SK-N-SH (cell line): ENCODE measurements at regions of chr17 and their contacts with region 1.

Region 1: GRCh38 chr17:73156166-73156840 is 8.5 kb upstream of the SSTR2 start:
- DNase-seq: peak; percentile 92
- H3K4me3 ChIP-seq: peak overlapping the region in 1 of 2 experiments; percentile 31; a peak in 2 of 4 replicates
- H3K27ac ChIP-seq: peak overlapping the region in 1 of 2 experiments; percentile 45; a peak in 1 of 4 replicates
- H3K4me1 ChIP-seq: peaks cover 6 to 22% of the 10 kb centered on the region in 2 experiments; a peak in 1 of 4 replicates
- H3K27me3 ChIP-seq: no peaks in the 10 kb centered on the region
- CTCF ChIP-seq: peak; percentile 89
- EP300 ChIP-seq: 0 out of 4 replicates have a peak, but pooled peaks have one; percentile 9 to 24
- RAD21 ChIP-seq: peak; percentile 90

Region 2: DNA sequence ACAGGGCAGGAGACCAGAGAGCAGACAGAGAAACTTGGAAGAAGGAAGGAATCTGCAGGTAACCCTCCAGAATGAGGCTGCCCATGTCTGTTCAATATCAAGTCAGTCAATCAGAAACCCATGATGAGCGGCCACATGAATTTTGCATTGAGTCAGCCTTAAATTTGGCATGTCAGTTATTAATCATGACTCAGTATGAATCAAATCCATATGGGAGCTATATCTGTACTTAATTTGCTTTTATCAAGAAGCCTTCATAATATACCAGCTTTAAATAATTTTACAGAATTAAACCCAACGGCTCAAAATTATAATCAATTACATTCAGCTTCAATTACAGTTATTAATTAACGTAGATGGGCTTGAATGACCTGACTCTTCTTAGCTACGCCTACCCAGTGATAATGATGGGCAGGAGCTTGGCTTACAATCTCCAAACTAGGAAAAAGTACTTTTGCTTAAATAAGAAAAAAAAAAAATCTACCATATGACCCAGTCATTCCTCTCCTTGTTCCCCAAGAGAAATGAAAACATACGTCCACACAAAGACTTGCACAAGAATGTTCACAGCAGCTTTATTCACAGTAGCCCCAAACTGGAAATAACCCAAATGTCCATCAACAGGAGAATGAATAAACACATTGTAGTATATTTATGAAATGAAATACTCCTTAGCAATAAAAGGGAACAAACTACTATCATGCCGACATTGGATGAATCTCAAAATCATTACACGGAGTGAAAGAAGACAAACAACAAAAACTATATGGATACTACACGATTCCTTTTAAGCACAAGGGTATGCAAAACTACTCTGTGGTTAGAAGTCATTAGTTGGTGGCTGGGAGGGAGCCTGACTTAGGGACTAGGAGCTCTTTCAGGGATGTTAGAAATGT is 112.4 kb before region 1 on chr17:
- CTCF ChIA-PET with region 1: interaction called, 12 read pairs
- POLR2A ChIA-PET with region 1: no interaction called
- DNase-seq: peak; percentile 35
- H3K4me3 ChIP-seq: peak overlapping the region in 1 of 2 experiments; percentile 16; a peak in 2 of 4 replicates
- H3K27ac ChIP-seq: peak overlapping the region; percentile 58 to 78
- H3K4me1 ChIP-seq: peaks cover 9 to 18% of the 10 kb centered on the region in 2 experiments; a peak in 3 of 4 replicates
- H3K27me3 ChIP-seq: no peaks in the 10 kb centered on the region
- CTCF ChIP-seq: no peak
- EP300 ChIP-seq: peak; percentile 89 to 99
- RAD21 ChIP-seq: no peak

Region 3: DNA sequence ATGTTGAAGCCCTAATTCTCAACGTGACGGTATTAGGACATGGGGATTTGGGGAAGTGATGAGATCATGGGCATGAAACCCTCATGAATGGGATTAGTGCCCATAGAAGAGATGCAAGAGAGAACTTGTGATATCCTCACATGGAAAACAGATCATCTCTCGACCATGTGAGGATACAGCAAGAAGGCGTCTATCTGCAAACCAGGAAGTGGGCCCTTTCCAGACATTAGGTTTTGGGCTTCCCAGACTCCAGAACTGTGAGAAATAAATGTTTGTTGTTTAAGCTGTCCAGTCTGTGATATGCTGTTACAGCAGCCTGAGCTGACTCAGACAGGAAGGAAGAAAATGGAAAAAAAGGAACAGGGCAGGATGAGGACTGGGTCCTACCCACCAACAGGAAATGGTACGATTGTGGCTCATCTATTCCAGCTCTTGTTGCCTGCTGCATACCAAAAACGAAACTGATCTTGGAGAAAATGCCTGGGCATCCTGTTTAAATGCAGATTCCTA is 13.4 kb before region 1 on chr17:
- CTCF ChIA-PET with region 1: interaction called, 10 read pairs
- POLR2A ChIA-PET with region 1: no interaction called
- DNase-seq: no peak
- H3K4me3 ChIP-seq: no peak overlapping the region
- H3K27ac ChIP-seq: no peak overlapping the region
- H3K4me1 ChIP-seq: no peaks in the 10 kb centered on the region
- H3K27me3 ChIP-seq: no peaks in the 10 kb centered on the region
- CTCF ChIP-seq: no peak
- EP300 ChIP-seq: no peak
- RAD21 ChIP-seq: no peak

Region 4: GRCh38 chr17:73166731-73167581 is 10.7 kb after region 1 on chr17:
- CTCF ChIA-PET with region 1: interaction called, 29 read pairs
- POLR2A ChIA-PET with region 1: interaction called, 6 read pairs
- DNase-seq: no peak
- H3K4me3 ChIP-seq: 0 out of 4 replicates have a peak overlapping the region, but pooled peaks of 1 of the 2 experiments have one; percentile 45
- H3K27ac ChIP-seq: no peak overlapping the region
- H3K4me1 ChIP-seq: peaks cover 0 to 22% of the 10 kb centered on the region in 2 experiments; a peak in 1 of 4 replicates
- H3K27me3 ChIP-seq: peaks cover 34% of the 10 kb centered on the region
- CTCF ChIP-seq: no peak
- EP300 ChIP-seq: no peak
- RAD21 ChIP-seq: no peak

Region 5: GRCh38 chr17:73172252-73172651 is 15.9 kb after region 1 on chr17:
- CTCF ChIA-PET with region 1: interaction called, 29 read pairs
- POLR2A ChIA-PET with region 1: no interaction called
- DNase-seq: no peak
- H3K4me3 ChIP-seq: no peak overlapping the region
- H3K27ac ChIP-seq: no peak overlapping the region
- H3K4me1 ChIP-seq: no peaks in the 10 kb centered on the region; a peak in 1 of 4 replicates
- H3K27me3 ChIP-seq: no peaks in the 10 kb centered on the region
- CTCF ChIP-seq: no peak
- EP300 ChIP-seq: no peak
- RAD21 ChIP-seq: no peak

Region 6: GRCh38 chr17:73182616-73183310 is 26.5 kb after region 1 on chr17:
- CTCF ChIA-PET with region 1: interaction called, 13 read pairs
- POLR2A ChIA-PET with region 1: no interaction called
- DNase-seq: peak; percentile 62
- H3K4me3 ChIP-seq: no peak overlapping the region
- H3K27ac ChIP-seq: 0 out of 4 replicates have a peak overlapping the region, but pooled peaks of 1 of the 2 experiments have one; percentile 8
- H3K4me1 ChIP-seq: peaks cover 0 to 6% of the 10 kb centered on the region in 2 experiments; a peak in 1 of 4 replicates
- H3K27me3 ChIP-seq: no peaks in the 10 kb centered on the region
- CTCF ChIP-seq: no peak
- EP300 ChIP-seq: no peak; a peak in 1 of 4 replicates
- RAD21 ChIP-seq: no peak

Region 7: DNA sequence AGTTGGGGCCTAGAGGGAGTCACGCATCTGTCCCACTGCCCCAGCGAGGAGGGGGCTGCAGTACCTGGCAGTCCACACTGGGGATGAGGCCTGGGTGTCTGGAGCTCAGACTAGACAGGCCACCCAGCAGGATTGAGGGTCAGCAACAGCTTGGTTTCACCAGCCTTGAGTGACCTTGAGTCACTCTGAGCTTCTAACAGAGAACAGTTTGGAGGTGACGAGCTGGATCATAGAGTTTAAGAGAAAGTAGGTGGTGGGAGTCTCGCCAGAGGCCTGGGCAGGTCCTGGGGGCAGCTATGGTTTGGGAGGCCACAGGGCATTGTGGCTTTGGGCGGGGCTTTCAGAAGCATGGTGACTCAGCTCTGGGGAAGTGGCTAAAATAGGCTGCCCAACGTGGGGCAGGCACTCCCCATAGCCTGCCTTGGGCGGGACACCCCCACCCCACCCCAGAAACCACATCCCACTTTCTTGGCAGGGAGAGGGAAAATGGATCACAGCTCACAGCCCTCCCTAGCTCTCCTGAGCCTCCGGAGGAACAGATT is 135.0 kb after region 1 on chr17:
- CTCF ChIA-PET with region 1: no interaction called
- POLR2A ChIA-PET with region 1: no interaction called
- DNase-seq: no peak
- H3K4me3 ChIP-seq: 0 out of 4 replicates have a peak overlapping the region, but pooled peaks of 1 of the 2 experiments have one; percentile 28
- H3K27ac ChIP-seq: peak overlapping the region in 1 of 2 experiments; percentile 88; a peak in 2 of 4 replicates
- H3K4me1 ChIP-seq: peaks cover 33 to 34% of the 10 kb centered on the region in 2 experiments; a peak in 3 of 4 replicates
- H3K27me3 ChIP-seq: no peaks in the 10 kb centered on the region
- CTCF ChIP-seq: no peak
- EP300 ChIP-seq: peak in 1 of 2 experiments; percentile 83; a peak in 1 of 4 replicates
- RAD21 ChIP-seq: no peak

Region 8: DNA sequence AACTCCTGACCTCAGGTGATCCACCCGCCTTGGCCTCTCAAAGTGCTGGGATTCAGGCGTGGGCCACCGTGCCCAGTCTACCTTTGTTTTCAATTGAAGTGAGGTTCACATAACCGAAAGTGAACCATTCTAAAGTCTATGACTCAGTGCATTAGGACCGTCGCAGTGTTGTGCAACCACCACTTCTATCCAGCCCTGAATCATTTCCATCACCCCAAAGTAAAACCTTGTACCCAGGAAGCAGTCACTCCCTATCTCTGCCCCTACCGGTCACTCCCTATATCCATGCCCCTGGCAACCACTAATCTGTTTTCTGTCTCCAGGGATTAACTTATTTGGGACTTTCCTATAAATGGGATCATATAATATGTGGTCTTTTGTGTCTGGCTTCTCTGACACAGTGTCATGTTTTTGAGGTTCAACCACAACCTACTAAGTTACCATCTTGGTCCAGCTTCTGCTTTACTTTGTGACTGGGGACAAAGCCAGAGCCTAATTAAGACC is 183.8 kb after region 1 on chr17:
- CTCF ChIA-PET with region 1: no interaction called
- POLR2A ChIA-PET with region 1: no interaction called
- DNase-seq: no peak
- H3K4me3 ChIP-seq: no peak overlapping the region
- H3K27ac ChIP-seq: peak overlapping the region in 1 of 2 experiments; percentile 54; a peak in 2 of 4 replicates
- H3K4me1 ChIP-seq: peaks cover 23 to 50% of the 10 kb centered on the region in 2 experiments
- H3K27me3 ChIP-seq: no peaks in the 10 kb centered on the region
- CTCF ChIP-seq: peak; percentile 49
- EP300 ChIP-seq: no peak; a peak in 1 of 4 replicates
- RAD21 ChIP-seq: no peak